PC-9 (cell line): ENCODE measurements at regions of chr4 and their contacts with region 1.

Region 1: DNA sequence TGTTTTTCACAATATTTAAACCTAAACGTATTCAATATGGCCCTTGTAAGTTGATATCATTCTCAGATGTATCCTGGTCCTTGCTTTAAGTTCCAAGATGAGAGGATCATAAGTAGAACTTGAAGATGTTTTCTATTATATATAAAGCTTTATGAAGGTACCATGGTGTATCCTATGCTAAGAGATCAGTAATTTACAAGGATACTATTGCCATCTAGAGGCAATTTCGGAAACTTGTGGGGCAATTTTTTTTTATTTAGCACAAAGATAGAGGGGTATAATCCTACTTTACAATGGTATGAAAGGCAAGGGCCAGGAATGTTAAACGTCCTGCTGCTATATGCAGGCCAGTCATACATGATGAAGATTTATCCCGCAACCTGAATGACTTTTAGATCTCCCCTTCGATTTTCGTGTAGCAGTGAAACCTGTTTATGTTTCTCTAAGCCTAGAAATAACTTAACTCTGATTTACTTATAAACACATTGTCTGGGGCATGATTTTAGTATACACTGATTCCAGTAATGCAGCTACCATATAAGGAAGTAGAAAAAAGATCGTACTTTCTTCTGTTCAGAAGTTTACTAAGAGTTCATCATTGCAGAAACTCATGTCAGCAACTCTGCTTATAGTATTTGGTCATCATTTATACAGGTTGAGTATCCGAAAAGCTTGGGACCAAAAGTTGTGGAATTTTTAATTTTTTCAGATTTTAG is 2.6 kb downstream of the SLC25A31 start:
- DNase-seq: peak; percentile 5 to 71
- H3K4me3 ChIP-seq: no peak overlapping the region
- H3K27ac ChIP-seq: no peak overlapping the region
- H3K4me1 ChIP-seq: no peaks in the 10 kb centered on the region
- H3K27me3 ChIP-seq: no peaks in the 10 kb centered on the region
- CTCF ChIP-seq: peak; percentile 92

Region 2: DNA sequence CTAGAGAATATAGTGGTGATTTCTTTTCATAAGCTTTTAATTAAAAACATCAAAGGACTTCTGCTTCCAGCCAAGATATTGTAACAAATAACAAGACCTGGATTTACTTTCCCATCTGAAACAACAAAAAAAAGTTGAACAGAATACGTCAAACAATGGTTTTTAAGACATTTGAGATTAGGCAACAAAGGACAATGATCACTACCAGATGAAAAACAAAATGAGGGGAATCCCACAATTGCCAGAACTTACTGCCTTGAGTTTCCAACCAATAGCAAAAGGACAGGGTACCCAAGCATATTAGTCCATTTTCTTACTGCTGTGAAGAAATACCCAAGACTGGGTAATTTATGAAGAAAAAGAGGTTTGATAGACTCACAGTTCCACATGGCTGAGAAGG is 441.5 kb before region 1 on chr4:
- CTCF ChIA-PET with region 1: no interaction called
- POLR2A ChIA-PET with region 1: no interaction called
- intact Hi-C with region 1: no loop called
- DNase-seq: no peak
- H3K4me3 ChIP-seq: no peak overlapping the region
- H3K27ac ChIP-seq: no peak overlapping the region
- H3K4me1 ChIP-seq: no peaks in the 10 kb centered on the region
- H3K27me3 ChIP-seq: no peaks in the 10 kb centered on the region
- CTCF ChIP-seq: no peak

Region 3: GRCh38 chr4:127604949-127605709 is 127.6 kb before region 1 on chr4:
- CTCF ChIA-PET with region 1: interaction called, 5 read pairs
- POLR2A ChIA-PET with region 1: interaction called, 3 read pairs
- intact Hi-C with region 1: loop called (anchors 1 kb)
- DNase-seq: peak in 1 of 2 experiments; percentile 64
- H3K4me3 ChIP-seq: no peak overlapping the region
- H3K27ac ChIP-seq: no peak overlapping the region
- H3K4me1 ChIP-seq: 0 out of 2 replicates have a peak, but pooled peaks cover 5% of the 10 kb centered on the region
- H3K27me3 ChIP-seq: no peaks in the 10 kb centered on the region
- CTCF ChIP-seq: peak; percentile 95

Region 4: DNA sequence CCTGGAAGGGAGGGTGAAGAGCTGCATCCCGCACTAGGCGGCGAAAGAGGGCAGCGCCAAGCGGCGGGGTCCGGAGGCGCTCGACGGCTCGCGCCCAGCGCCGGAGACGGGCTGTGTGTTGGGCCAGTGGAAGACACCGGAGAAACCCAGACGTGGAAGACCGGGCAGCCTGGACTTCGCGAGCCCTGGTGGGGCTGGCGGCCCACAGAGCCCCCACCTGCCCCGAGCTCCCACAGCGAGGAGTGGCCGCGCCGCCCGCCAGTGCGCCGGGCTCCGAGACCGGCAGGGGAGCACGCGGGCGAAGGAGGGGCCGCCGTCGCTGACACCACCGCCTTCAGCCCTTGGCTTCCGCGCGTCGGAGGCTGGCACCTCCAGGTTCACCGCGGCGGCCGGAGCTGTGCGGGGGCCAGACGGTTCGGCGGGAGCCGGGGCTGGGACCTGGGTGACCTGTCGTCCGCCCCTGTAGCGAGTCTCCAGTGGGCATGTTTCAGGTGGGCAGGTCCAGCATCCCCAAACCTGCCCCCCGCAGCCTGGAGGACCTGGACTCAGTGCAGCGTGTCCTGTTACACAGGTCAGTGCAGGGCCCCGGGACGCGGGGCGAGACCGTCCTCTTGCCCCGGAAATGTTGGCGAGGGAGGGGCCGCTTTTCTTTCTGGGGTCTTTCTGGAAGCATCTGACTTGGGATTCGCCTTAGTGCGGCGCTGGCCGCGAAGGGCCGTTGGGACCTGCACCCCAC is 109.7 kb before region 1 on chr4:
- CTCF ChIA-PET with region 1: interaction called, 5 read pairs
- POLR2A ChIA-PET with region 1: no interaction called
- intact Hi-C with region 1: loop called (anchors 5 kb)
- DNase-seq: peak; percentile 60 to 69
- H3K4me3 ChIP-seq: peak overlapping the region; percentile 62
- H3K27ac ChIP-seq: no peak overlapping the region
- H3K4me1 ChIP-seq: no peaks in the 10 kb centered on the region
- H3K27me3 ChIP-seq: 0 out of 2 replicates have a peak, but pooled peaks cover 6% of the 10 kb centered on the region
- CTCF ChIP-seq: peak; percentile 61

Region 5: DNA sequence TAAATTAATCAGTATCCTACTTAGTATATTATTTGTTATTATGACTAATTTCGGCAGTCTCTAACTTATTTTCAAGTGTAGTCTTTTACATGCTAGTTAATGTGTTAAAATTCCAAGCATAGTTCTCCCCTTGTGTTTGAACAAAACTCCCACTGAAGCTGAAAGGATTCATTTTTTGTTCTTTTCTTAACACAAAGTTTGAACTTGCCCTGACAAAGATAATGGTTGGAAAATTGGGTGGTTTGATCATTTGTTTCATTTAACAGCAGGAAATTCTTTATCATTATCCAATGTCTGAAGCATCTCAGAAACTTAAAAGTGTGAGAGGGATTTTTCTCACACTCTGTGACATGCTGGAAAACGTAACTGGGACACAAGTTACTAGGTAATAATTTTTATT is 64.0 kb before region 1 on chr4:
- CTCF ChIA-PET with region 1: no interaction called
- POLR2A ChIA-PET with region 1: no interaction called
- intact Hi-C with region 1: no loop called
- DNase-seq: no peak
- H3K4me3 ChIP-seq: no peak overlapping the region
- H3K27ac ChIP-seq: no peak overlapping the region
- H3K4me1 ChIP-seq: no peaks in the 10 kb centered on the region
- H3K27me3 ChIP-seq: no peaks in the 10 kb centered on the region
- CTCF ChIP-seq: no peak

Region 6: DNA sequence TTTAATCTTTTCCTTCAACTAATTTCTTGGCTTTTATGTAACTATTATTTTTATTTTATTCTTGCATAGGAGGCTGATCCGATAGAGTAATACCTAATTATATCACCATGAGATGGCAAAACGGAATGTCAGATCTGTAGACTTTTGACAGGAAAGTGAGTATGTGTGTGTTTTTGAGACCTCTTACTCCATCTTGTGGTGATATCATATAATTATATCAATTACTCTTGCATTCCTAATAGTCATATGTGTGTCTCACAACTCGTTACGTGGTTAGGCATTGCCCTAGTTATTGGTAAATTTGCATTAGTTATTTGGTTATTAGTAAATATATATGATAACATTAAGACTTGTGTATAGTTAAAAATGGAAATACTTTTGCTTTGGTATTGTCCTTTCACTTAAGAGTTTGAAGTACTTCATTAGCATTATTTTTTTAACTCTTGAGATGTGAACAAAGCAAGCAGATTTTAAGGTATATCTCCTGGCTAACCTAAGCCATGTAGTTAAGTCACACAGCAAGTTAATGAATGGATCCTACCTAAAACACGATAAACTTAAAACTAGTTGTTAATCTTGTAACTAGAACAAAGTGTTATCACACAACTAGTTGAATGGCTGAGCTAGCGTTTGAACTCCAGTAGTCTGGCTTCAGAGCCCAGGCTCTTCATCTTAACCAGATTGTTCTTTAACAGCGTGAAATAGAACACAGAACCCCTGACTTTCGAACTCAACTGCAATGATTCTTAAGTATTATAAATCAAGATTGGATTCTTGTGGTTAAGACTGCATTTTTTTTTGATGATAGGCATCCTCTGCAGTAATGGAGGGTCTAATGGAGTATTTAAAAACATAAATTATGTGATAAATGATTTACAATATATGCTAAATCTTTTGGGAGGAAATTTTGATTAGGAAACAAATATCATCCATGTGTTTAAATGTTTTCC is 487.8 kb after region 1 on chr4:
- CTCF ChIA-PET with region 1: no interaction called
- POLR2A ChIA-PET with region 1: no interaction called
- intact Hi-C with region 1: loop called (anchors 5 kb)
- DNase-seq: peak in 1 of 2 experiments; percentile 37
- H3K4me3 ChIP-seq: no peak overlapping the region
- H3K27ac ChIP-seq: no peak overlapping the region
- H3K4me1 ChIP-seq: no peaks in the 10 kb centered on the region
- H3K27me3 ChIP-seq: no peaks in the 10 kb centered on the region
- CTCF ChIP-seq: peak; percentile 51; the same call in 1 of the 2 replicates